H1 (cell line): ENCODE measurements at regions of chr11 and their contacts with region 1.

Region 1: DNA sequence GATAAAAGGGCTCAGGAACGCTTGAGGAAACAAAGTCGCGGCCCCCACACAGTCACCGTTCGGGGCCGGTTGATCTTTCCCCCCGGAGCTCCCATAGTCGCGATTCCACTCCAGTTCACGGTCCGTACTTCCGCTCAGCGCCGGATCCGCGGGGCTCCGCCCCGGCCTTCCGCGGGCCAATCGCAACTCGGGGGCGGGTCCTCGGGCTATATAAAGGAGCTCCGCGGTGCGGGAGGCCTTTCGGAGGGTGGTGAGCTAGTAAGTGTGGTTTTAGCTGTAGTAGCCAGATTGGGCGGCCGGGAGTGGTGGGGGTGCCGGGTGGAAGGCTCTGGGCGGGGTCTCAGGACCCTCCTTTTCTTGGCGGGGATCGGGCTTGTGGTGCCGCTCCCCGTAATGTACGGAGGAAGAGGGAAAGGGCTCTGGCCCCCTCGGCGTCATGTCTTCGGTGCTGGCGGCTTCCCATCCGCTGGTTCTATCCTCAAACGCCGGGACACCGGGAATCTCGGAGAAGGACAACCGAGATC is at the starts of genes C11orf98 and CSKMT:
- DNase-seq: peak; percentile 79 to 99
- H3K4me3 ChIP-seq: peak within 1 kb of the TSS; percentile 83 to 98 (median 95)
- H3K27ac ChIP-seq: peak within 1 kb of the TSS; percentile 81
- H3K4me1 ChIP-seq: peaks cover 4 to 11% (median 8%) of the 10 kb centered on the region in 4 experiments
- H3K27me3 ChIP-seq: no peaks in the 10 kb centered on the region
- CTCF ChIP-seq: no peak; a peak in 1 of 4 replicates
- EP300 ChIP-seq: peak in 1 of 2 experiments; percentile 71; a peak in 1 of 3 replicates
- POLR2A ChIP-seq: peak; percentile 100
- RAD21 ChIP-seq: no peak; a peak in 1 of 4 replicates
- total RNA-seq, gene C11orf98: 171 and 173 TPM in 2 replicates
- total RNA-seq, gene CSKMT: 66.1 and 67.8 TPM in 2 replicates

Region 2: DNA sequence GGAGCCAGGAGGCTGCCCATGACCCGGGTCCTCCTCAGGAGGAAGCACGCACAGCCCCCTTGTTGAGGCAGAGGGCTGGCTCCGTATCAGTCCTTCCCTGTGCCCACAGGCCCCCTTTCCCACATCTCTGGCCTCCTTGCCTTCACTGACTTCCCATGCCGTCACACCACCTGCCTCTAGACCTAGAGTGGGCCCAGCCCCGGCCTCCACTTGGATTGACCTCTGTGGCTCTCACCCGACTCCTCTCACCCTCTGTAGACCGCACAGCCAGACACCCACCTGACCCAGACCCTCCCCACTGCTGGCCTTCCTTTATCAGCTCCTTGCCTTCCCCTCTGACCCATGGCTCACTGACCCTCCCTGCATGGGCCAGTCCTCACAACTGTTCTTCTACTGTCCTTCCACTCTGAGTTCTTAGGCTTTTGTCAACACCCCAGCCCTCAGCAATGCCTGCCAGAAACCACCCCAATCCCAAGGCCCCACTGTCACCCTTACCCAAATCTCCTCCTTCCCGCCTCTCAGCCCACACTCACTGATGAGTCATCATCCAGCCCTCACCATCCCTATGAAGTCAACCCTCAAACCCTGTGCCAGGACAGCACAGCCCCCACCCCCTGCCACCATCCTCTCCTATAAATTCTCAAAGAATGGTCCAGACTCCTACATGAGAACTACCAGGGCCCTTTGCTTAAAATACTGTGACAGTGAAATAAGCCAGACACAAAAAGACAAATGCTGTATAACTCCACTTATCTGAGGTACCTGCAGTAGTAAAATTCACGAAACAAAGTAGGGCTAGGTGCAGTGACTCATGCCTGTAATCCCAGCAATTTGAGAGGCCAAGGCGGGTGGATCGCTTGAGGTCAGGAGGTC is 192.9 kb before region 1 on chr11:
- CTCF ChIA-PET with region 1: no interaction called
- POLR2A ChIA-PET with region 1: no interaction called
- DNase-seq: no peak
- H3K4me3 ChIP-seq: no peak overlapping the region
- H3K27ac ChIP-seq: no peak overlapping the region
- H3K4me1 ChIP-seq: no peaks in the 10 kb centered on the region
- H3K27me3 ChIP-seq: no peaks in the 10 kb centered on the region
- CTCF ChIP-seq: no peak
- EP300 ChIP-seq: no peak
- POLR2A ChIP-seq: no peak
- RAD21 ChIP-seq: no peak

Region 3: GRCh38 chr11:62536301-62536957 is 128.7 kb before region 1 on chr11:
- CTCF ChIA-PET with region 1: no interaction called
- POLR2A ChIA-PET with region 1: no interaction called
- DNase-seq: no peak
- H3K4me3 ChIP-seq: no peak overlapping the region
- H3K27ac ChIP-seq: no peak overlapping the region
- H3K4me1 ChIP-seq: peaks cover 0 to 9% (median 4%) of the 10 kb centered on the region in 4 experiments; a peak in 5 of 7 replicates
- H3K27me3 ChIP-seq: no peaks in the 10 kb centered on the region; a peak in 2 of 7 replicates
- CTCF ChIP-seq: no peak
- EP300 ChIP-seq: no peak
- POLR2A ChIP-seq: no peak
- RAD21 ChIP-seq: no peak

Region 4: DNA sequence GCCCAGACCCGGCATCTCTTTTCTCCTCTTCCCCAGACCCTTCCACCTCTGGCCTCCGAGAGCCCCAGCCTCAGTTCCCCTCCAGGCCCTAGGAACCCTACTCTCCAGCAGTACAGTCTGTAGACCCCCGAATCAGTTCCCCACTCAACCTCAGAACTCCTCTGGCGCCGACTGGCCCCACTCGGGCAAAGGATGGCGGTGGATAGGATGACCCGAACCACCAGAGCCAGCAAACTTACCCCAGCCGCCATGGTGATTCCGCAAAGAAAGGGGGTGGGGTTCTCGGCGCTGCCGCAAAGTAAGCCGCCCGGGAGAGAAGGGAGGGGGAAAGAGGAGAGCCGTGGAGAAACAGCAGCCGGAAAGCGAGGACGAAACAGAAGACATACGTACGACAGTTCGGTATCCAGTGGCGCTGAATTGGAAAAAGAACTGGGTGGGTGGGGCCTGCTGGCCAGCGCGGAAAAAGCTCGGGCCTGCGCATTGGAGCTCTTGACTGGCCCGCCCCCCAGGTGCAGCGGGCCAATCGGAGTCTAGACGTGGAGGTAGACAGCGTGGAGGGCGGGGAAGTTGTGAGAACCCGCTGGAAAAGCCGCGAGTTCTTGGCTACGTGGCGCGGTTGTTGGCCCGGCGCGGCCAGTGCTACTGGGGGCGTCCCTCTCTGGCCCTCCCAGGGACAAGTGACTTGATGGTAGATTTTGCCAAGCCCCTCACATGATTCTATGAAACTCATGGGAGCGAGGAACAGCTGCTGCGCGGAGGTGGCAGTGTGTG is 91.4 kb before region 1 on chr11 and contains the start of gene EEF1G:
- CTCF ChIA-PET with region 1: no interaction called
- POLR2A ChIA-PET with region 1: interaction called, 21 read pairs
- DNase-seq: peak; percentile 96 to 99
- H3K4me3 ChIP-seq: peak within 1 kb of the TSS; percentile 90 to 100 (median 91)
- H3K27ac ChIP-seq: peak within 1 kb of the TSS; percentile 75
- H3K4me1 ChIP-seq: peaks cover 0 to 11% (median 7%) of the 10 kb centered on the region in 4 experiments; a peak in 4 of 7 replicates
- H3K27me3 ChIP-seq: no peaks in the 10 kb centered on the region
- CTCF ChIP-seq: no peak
- EP300 ChIP-seq: peak in 1 of 2 experiments; percentile 48; a peak in 1 of 3 replicates
- POLR2A ChIP-seq: peak; percentile 64 to 86
- RAD21 ChIP-seq: no peak
- total RNA-seq, gene EEF1G: 1,622 and 1,627 TPM in 2 replicates

Region 5: GRCh38 chr11:62612366-62613290 is 52.5 kb before region 1 on chr11 and contains the starts of genes EML3 and ROM1:
- CTCF ChIA-PET with region 1: interaction called, 5 read pairs
- POLR2A ChIA-PET with region 1: interaction called, 74 read pairs
- DNase-seq: peak; percentile 85 to 94
- H3K4me3 ChIP-seq: peak within 1 kb of the TSS; percentile 48 to 73 (median 58)
- H3K27ac ChIP-seq: no peak within 1 kb of the TSS
- H3K4me1 ChIP-seq: peaks cover 0 to 19% (median 12%) of the 10 kb centered on the region in 4 experiments; a peak in 6 of 7 replicates
- H3K27me3 ChIP-seq: peaks cover 0 to 3% (median 2%) of the 10 kb centered on the region in 4 experiments; a peak in 1 of 7 replicates
- CTCF ChIP-seq: peak; percentile 65 to 100 (median 87)
- EP300 ChIP-seq: no peak
- POLR2A ChIP-seq: no peak; a peak in 1 of 3 replicates
- RAD21 ChIP-seq: peak; percentile 23 to 47; a peak in 3 of 4 replicates
- total RNA-seq, gene EML3: 29.9 and 31.2 TPM in 2 replicates
- total RNA-seq, gene ROM1: 0.55 and 2.2 TPM in 2 replicates

Region 6: DNA sequence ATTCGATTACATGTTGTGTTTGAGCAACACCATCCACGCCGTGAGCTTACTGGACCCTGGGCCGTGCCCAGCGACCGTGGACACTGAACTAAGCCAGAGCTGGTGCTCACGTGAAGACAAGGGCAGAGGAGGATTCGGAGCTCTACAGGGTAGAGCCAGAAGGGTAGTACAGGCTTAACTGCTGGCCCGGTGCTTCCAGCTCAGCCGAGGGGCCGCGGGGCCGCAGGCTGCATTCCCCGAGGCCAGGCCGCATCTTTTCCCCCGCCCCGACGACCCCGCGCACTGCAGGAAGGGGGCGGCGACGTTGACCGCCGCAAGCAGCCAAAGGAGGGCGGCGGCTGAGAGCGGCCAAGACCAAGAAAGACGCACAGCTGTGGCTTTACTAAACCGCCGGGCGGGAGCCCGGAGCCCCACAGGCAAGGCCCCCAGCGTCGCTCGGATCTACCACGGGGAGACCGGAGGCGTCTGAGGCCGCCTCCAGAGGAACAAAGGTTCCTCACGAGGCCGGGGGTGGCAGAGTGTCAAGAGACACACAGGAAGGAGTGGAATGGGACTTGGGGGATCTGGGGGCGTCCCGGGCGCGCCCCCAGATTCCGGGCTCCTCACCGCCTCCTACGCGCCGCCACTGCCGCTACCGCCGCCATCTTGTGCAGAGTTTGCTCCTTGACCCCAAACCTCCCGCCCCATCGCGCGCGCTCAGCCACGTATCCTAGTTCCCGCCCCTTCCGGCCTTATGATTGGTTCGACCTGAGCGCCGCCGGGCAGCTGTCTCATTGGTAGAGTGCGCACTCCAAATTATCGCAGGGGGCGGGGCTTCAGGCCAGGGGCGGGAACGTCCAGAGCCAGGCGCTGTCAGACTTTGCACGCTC is 18.9 kb before region 1 on chr11 and contains the start of gene GANAB:
- CTCF ChIA-PET with region 1: interaction called, 5 read pairs
- POLR2A ChIA-PET with region 1: interaction called, 2,041 read pairs
- DNase-seq: peak; percentile 87 to 96
- H3K4me3 ChIP-seq: peak within 1 kb of the TSS; percentile 71 to 99 (median 90)
- H3K27ac ChIP-seq: peak within 1 kb of the TSS; percentile 90
- H3K4me1 ChIP-seq: no peaks in the 10 kb centered on the region; a peak in 2 of 7 replicates
- H3K27me3 ChIP-seq: no peaks in the 10 kb centered on the region
- CTCF ChIP-seq: no peak
- EP300 ChIP-seq: no peak
- POLR2A ChIP-seq: peak; percentile 82 to 99
- RAD21 ChIP-seq: no peak
- total RNA-seq, gene GANAB: 326 and 330 TPM in 2 replicates

Region 7: DNA sequence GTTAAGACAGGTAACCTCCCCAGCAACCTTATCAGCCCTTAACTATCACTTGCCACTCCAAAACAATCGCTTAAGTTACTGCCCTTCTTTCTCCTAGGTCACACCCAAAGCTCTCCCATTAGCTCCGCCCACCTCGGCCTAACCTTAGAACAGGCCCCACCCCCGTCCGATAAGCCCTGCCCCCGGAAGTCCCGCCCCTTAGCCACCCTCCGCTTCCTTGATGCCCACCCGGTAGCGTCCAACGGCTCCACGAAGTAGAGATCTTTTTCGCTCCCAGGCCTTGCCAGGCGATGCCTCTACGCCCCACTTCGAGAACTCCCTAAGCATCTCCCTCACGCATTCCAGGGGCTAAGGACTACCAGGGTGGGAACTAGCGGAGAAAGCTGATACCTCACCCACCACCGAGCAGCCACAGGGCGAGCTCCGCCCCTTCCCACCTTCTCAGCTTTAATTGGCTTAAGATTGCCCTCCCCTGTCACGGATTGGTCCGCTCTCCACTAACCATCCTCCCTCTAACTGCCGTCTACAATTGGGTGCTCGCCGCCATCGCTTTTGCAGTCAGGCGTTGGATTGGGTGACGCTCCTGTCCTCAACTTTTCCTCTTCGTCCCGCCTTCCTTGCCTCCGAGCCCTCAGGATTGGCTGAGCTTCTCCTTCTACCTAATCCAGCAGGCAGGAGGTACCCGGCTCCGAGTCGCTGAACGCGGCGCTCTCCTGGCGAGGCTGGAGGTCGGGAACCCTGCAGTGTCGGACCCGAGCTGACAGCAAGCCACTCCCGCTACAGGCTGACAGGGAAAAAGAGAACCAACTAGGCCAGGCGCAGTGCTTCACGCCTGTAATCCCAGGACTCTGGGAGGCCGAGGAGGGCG is 88.8 kb after region 1 on chr11 and contains the start of gene ZBTB3:
- CTCF ChIA-PET with region 1: no interaction called
- POLR2A ChIA-PET with region 1: interaction called, 21 read pairs
- DNase-seq: peak; percentile 97 to 99
- H3K4me3 ChIP-seq: peak within 1 kb of the TSS; percentile 74 to 89 (median 82)
- H3K27ac ChIP-seq: peak within 1 kb of the TSS; percentile 86
- H3K4me1 ChIP-seq: peaks cover 4 to 9% (median 6%) of the 10 kb centered on the region in 4 experiments
- H3K27me3 ChIP-seq: no peaks in the 10 kb centered on the region
- CTCF ChIP-seq: no peak
- EP300 ChIP-seq: no peak
- POLR2A ChIP-seq: peak; percentile 37 to 79
- RAD21 ChIP-seq: 0 out of 4 replicates have a peak, but pooled peaks of 1 of the 2 experiments have one; percentile 6
- total RNA-seq, gene ZBTB3: 76.5 and 76.9 TPM in 2 replicates

Region 8: DNA sequence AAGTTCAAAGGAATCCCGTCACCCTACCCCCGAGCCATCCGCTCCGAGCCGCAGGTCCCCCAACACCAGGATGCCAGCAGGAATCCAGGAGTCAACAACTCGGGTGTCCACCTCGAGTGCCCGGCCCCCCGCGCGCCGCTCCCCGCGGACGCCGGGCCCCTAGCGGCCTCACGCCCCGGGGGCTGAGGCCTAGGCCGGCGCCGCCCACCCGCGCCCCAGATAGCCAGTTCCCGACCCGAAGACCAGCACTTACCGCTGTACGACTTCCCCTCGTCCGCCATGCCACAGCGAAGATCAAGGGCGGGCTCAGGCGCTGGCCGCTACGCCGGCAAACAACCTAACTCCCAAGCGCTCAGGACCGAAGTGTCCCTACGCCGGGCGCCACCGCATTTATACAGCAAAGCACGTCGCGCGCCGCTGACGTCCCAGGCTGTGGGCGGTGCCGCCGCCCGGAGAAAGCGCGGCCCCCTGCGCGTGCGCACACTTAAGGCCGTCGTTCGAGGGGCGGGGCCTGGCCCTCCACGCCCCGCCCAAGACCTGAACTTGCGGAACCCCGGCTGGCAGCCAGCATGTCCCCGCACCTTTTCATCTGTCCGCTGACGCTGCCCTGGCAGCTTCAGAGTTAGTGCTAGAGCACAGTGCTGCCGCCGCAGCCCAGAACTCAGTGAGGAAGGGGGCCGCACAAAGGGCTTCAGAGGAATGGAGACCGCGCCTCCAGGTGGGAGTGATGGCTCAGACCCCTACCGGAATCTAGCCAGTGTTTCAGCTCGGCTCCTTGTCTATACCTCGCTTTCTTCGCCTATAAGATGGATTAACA is 140.1 kb after region 1 on chr11 and contains the start of gene NXF1:
- CTCF ChIA-PET with region 1: no interaction called
- POLR2A ChIA-PET with region 1: interaction called, 20 read pairs
- DNase-seq: peak; percentile 96 to 100
- H3K4me3 ChIP-seq: peak within 1 kb of the TSS; percentile 66 to 85 (median 81)
- H3K27ac ChIP-seq: peak within 1 kb of the TSS; percentile 48; the same call in 1 of the 2 replicates
- H3K4me1 ChIP-seq: peaks cover 0 to 5% (median under 1%) of the 10 kb centered on the region in 4 experiments; a peak in 1 of 7 replicates
- H3K27me3 ChIP-seq: no peaks in the 10 kb centered on the region
- CTCF ChIP-seq: peak in 1 of 3 experiments; percentile 20; a peak in 1 of 4 replicates
- EP300 ChIP-seq: peak in 1 of 2 experiments; percentile 65; a peak in 1 of 3 replicates
- POLR2A ChIP-seq: peak; percentile 100
- RAD21 ChIP-seq: 0 out of 4 replicates have a peak, but pooled peaks of 1 of the 2 experiments have one; percentile 4
- total RNA-seq, gene NXF1: 44.8 and 49.8 TPM in 2 replicates

Region 9: GRCh38 chr11:62816557-62816956 is 151.4 kb after region 1 on chr11:
- CTCF ChIA-PET with region 1: no interaction called
- POLR2A ChIA-PET with region 1: no interaction called
- DNase-seq: no peak
- H3K4me3 ChIP-seq: no peak overlapping the region
- H3K27ac ChIP-seq: no peak overlapping the region
- H3K4me1 ChIP-seq: no peaks in the 10 kb centered on the region
- H3K27me3 ChIP-seq: no peaks in the 10 kb centered on the region
- CTCF ChIP-seq: no peak
- EP300 ChIP-seq: no peak
- POLR2A ChIP-seq: no peak
- RAD21 ChIP-seq: no peak